ENCODE measurements at regions of chr12 and their contacts with region 1.

Region 1: DNA sequence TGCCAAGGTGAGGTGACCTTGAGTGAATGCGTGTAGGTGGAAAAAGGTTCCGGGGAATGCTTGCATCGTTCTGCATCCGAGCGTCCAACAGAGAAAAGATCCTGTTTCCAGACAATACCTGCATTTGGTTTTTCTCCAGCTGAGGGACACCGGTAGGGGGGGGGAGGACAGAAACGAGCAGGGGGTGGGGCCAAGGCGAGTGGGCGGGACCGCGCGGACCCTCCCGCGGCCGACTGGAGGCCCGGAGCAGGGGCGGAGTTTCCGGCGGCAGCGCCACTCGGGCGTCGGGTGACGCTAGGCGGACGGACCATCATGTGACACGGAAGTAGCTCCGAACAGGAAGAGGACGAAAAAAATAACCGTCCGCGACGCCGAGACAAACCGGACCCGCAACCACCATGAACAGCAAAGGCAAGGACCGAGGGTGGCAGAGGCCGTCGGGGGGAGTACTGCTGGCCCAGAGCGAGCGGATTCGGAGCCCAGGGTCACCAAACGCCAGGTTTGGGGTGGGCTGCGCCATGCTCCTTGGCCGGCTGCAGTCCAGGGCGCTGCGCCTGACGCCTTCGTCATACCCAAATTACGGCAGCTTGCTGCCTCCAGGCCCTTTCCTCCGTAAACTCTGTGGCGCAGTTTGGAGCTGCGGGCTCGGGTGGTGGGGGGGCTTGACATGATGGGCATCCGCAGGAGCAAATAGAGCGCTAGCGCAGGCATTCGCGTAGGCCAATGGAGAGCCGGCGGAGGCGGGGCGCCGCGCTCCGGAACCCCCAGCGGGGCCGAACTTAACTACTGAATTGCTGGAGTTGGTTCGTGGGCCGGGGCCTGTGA is at the start of gene DAZAP2:
- DNase-seq: peak; percentile 98
- ATAC-seq: peak; percentile 92
- H3K4me3 ChIP-seq: peak within 1 kb of the TSS; percentile 69 to 100 (median 100)
- H3K4me3 Mint-ChIP-seq: peak within 1 kb of the TSS; percentile 93
- H3K27ac ChIP-seq: peak within 1 kb of the TSS; percentile 100
- H3K27ac Mint-ChIP-seq: peak within 1 kb of the TSS; percentile 100
- H3K4me1 ChIP-seq: peaks cover 24 to 34% of the 10 kb centered on the region in 2 donors
- H3K4me1 Mint-ChIP-seq: peaks cover 40% of the 10 kb centered on the region
- H3K27me3 ChIP-seq: no peaks in the 10 kb centered on the region
- H3K27me3 Mint-ChIP-seq: no peaks in the 10 kb centered on the region
- CTCF ChIP-seq: peak; percentile 31
- total RNA-seq, gene DAZAP2: 219 and 233 TPM in 2 replicates

Region 2: GRCh38 chr12:51083126-51083833 is 155.4 kb before region 1 on chr12 and contains the start of gene CSRNP2:
- CTCF ChIA-PET with region 1: interaction called, 6 read pairs
- POLR2A ChIA-PET with region 1: interaction called, 13 read pairs
- intact Hi-C with region 1: loop called (anchors 1 kb)
- DNase-seq: peak; percentile 96
- ATAC-seq: peak; percentile 99
- H3K4me3 ChIP-seq: peak within 1 kb of the TSS; percentile 54 to 87 (median 77)
- H3K4me3 Mint-ChIP-seq: peak within 1 kb of the TSS; percentile 96
- H3K27ac ChIP-seq: peak within 1 kb of the TSS; percentile 11 to 88
- H3K27ac Mint-ChIP-seq: peak within 1 kb of the TSS; percentile 88
- H3K4me1 ChIP-seq: peaks cover 9 to 17% of the 10 kb centered on the region in 2 donors
- H3K4me1 Mint-ChIP-seq: peaks cover 25% of the 10 kb centered on the region
- H3K27me3 ChIP-seq: no peaks in the 10 kb centered on the region
- H3K27me3 Mint-ChIP-seq: no peaks in the 10 kb centered on the region
- CTCF ChIP-seq: peak; percentile 20
- total RNA-seq, gene CSRNP2: 49.8 and 52.3 TPM in 2 replicates

Region 3: DNA sequence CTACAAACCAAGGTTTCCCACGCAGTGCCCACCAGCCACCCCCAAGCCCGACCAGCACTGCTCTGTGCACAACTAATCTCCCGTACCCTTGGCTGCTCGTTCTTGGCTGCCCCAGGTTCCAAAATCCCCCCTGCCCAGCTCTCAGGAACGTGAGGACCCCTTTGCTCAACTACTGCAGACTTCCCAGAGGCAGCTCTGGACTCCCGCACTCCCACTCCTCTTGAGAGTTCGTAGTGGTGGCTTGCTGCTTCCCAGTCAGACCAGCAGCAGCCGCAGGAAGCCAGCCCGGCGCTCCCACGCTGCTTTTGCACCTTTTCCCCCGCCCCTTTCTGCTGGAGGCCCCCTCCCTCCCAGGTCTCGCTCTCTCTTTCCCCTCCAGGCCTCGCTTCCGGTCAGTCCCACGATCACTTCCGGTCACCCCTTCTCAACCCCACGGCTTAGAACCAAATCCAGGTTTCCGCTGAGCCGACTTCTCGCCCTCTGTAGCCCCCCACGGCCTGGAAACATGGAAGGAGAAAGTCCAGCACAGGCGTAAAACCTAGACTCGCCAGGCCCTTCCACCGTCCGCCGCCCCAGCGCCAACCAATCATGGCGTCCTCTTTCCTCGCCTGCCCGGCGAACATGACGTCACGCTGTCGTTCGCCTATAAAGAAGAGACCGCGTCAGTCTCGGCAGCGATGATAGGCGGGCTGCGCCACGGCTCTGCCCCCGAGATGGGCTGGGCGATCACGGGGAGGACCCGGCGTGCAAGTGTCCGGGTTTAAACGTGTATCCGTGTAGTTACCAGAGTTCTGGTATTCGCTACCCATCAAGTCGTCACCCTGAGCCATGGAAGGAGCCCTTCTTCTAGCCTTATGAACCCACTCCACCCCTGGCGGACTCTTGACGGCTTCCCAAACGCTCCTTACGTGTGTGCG is 65.9 kb before region 1 on chr12 and contains the start of gene TFCP2:
- CTCF ChIA-PET with region 1: no interaction called
- POLR2A ChIA-PET with region 1: no interaction called
- intact Hi-C with region 1: loop called (anchors 1 kb)
- DNase-seq: peak; percentile 97
- ATAC-seq: peak; percentile 99
- H3K4me3 ChIP-seq: peak within 1 kb of the TSS; percentile 75 to 100 (median 88)
- H3K4me3 Mint-ChIP-seq: peak within 1 kb of the TSS; percentile 83
- H3K27ac ChIP-seq: peak within 1 kb of the TSS; percentile 85 to 96
- H3K27ac Mint-ChIP-seq: peak within 1 kb of the TSS; percentile 77
- H3K4me1 ChIP-seq: peaks cover 16 to 19% of the 10 kb centered on the region in 2 donors
- H3K4me1 Mint-ChIP-seq: peaks cover 15% of the 10 kb centered on the region
- H3K27me3 ChIP-seq: no peaks in the 10 kb centered on the region
- H3K27me3 Mint-ChIP-seq: no peaks in the 10 kb centered on the region
- CTCF ChIP-seq: no peak
- total RNA-seq, gene TFCP2: 37.0 and 38.8 TPM in 2 replicates

Region 4: GRCh38 chr12:51253276-51253675 is 14.6 kb after region 1 on chr12:
- CTCF ChIA-PET with region 1: no interaction called
- POLR2A ChIA-PET with region 1: interaction called, 14 read pairs
- intact Hi-C with region 1: no loop called
- DNase-seq: no peak
- ATAC-seq: no peak
- H3K4me3 ChIP-seq: no peak overlapping the region
- H3K4me3 Mint-ChIP-seq: no peak overlapping the region
- H3K27ac ChIP-seq: no peak overlapping the region
- H3K27ac Mint-ChIP-seq: no peak overlapping the region
- H3K4me1 ChIP-seq: no peaks in the 10 kb centered on the region
- H3K4me1 Mint-ChIP-seq: peaks cover 9% of the 10 kb centered on the region
- H3K27me3 ChIP-seq: no peaks in the 10 kb centered on the region
- H3K27me3 Mint-ChIP-seq: no peaks in the 10 kb centered on the region
- CTCF ChIP-seq: no peak

Region 5: DNA sequence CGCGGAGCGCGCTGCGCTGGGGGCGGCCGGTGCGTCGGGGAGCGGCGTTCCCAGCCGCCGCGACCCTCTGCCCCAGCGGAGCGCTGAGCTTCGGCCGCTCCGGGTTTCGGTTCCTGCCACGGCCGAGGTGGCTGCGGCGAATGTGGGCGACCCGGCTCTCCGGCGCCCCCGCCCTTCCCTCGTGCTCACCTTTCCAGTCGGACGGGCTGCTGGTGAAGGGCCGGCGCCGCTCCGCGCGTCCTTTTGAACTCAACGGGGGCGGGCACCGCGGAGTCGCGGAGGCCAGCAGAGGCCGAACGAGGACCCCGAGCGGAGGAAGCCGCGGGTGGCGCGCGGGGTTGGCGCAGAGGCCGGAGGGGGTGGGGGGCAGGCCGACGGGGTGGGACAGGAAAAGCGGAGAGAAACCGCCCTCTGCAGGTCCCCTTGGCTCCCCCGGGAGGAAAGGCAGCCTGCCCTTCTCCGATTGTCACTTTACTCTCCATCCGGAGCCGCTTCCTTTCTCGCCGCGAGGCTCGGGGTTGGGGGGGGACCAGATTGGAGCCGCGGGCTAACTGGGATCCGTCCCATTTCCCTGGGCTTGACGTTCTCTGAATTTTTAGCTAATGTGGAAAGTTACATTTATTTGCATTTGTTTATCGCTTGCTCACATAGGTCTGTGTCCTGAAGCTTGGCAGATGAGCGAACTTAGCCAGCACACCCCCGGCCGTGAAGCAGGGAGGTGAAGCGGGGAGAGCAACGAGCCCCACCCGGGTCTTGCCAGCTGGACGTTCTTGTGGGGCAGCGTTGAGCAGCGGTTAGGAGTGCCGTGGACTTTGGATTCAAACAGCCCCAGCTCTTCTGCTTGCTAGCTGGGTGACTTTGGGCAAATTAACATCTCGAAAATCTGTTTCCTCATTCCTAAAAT is 31.6 kb after region 1 on chr12 and contains the start of gene SMAGP:
- CTCF ChIA-PET with region 1: interaction called, 4 read pairs
- POLR2A ChIA-PET with region 1: interaction called, 16 read pairs
- intact Hi-C with region 1: loop called (anchors 1 kb)
- DNase-seq: peak; percentile 79
- ATAC-seq: peak; percentile 75
- H3K4me3 ChIP-seq: peak within 1 kb of the TSS; percentile 52 to 86 (median 74)
- H3K4me3 Mint-ChIP-seq: peak within 1 kb of the TSS; percentile 95
- H3K27ac ChIP-seq: peak within 1 kb of the TSS; percentile 12 to 64
- H3K27ac Mint-ChIP-seq: peak within 1 kb of the TSS; percentile 91
- H3K4me1 ChIP-seq: peaks cover 19 to 20% of the 10 kb centered on the region in 2 donors
- H3K4me1 Mint-ChIP-seq: peaks cover 31% of the 10 kb centered on the region
- H3K27me3 ChIP-seq: no peaks in the 10 kb centered on the region
- H3K27me3 Mint-ChIP-seq: no peaks in the 10 kb centered on the region
- CTCF ChIP-seq: no peak
- total RNA-seq, gene SMAGP: 8.0 and 10.4 TPM in 2 replicates

Region 6: DNA sequence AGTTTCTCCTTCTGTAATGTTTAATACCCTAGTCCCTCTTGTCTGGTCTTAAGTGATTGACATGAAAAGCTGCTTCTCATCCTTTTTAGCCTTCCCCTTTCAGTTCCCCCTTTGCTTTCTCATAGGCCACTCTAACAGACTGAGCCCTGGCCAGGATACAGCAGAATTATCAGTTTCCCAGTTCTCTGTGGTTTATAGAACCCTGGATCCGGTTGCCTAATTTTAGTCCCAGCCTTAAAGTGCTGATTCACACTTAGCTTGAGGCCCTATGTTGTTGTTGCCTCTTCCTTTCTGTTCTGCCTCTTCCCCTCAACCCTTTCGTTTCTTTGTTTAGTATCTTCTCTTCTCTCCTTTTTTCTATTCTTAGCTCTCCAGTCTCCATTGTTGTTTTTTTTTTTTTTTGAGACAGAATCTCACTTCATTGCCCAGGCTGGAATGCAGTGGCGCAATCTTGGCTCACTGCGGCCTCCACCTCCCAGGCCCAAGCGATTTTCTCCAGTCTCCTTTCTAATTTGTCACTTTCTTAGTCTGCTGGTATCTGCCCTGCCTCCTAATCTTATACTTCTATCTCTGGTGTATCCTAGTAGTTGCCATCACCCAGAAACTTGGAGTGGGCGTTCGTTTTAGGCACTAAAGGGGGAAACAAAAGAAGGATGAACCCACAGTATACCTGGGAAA is 88.2 kb after region 1 on chr12:
- CTCF ChIA-PET with region 1: interaction called, 4 read pairs
- POLR2A ChIA-PET with region 1: interaction called, 6 read pairs
- intact Hi-C with region 1: loop called (anchors 5 kb)
- DNase-seq: peak; percentile 73
- ATAC-seq: peak; percentile 28
- H3K4me3 ChIP-seq: peak overlapping the region in 1 of 5 experiments; percentile 22
- H3K4me3 Mint-ChIP-seq: peak overlapping the region; percentile 35
- H3K27ac ChIP-seq: peak overlapping the region; percentile 59 to 64
- H3K27ac Mint-ChIP-seq: peak overlapping the region; percentile 83
- H3K4me1 ChIP-seq: peaks cover 72 to 79% of the 10 kb centered on the region in 2 donors
- H3K4me1 Mint-ChIP-seq: peaks cover 80% of the 10 kb centered on the region
- H3K27me3 ChIP-seq: no peaks in the 10 kb centered on the region
- H3K27me3 Mint-ChIP-seq: no peaks in the 10 kb centered on the region
- CTCF ChIP-seq: no peak

Region 7: GRCh38 chr12:51647647-51648046 is 408.9 kb after region 1 on chr12:
- CTCF ChIA-PET with region 1: no interaction called
- POLR2A ChIA-PET with region 1: no interaction called
- intact Hi-C with region 1: no loop called
- DNase-seq: no peak
- ATAC-seq: no peak
- H3K4me3 ChIP-seq: no peak overlapping the region
- H3K4me3 Mint-ChIP-seq: no peak overlapping the region
- H3K27ac ChIP-seq: no peak overlapping the region
- H3K27ac Mint-ChIP-seq: no peak overlapping the region
- H3K4me1 ChIP-seq: no peaks in the 10 kb centered on the region
- H3K4me1 Mint-ChIP-seq: no peaks in the 10 kb centered on the region
- H3K27me3 ChIP-seq: peaks cover 0 to 5% (median 0%) of the 10 kb centered on the region in 4 experiments
- H3K27me3 Mint-ChIP-seq: peaks cover 25% of the 10 kb centered on the region
- CTCF ChIP-seq: no peak

Measured in B cell (primary cell).